ENCODE measurements at regions of chr2 and their contacts with region 1.

Region 1: GRCh38 chr2:11124503-11125068 is 30.7 kb upstream of the SLC66A3 start:
- DNase-seq: peak; percentile 45
- H3K4me3 ChIP-seq: no peak overlapping the region
- H3K27ac ChIP-seq: no peak overlapping the region
- H3K4me1 ChIP-seq: peaks cover 21% of the 10 kb centered on the region
- H3K27me3 ChIP-seq: no peaks in the 10 kb centered on the region
- CTCF ChIP-seq: peak; percentile 91 to 97

Region 2: DNA sequence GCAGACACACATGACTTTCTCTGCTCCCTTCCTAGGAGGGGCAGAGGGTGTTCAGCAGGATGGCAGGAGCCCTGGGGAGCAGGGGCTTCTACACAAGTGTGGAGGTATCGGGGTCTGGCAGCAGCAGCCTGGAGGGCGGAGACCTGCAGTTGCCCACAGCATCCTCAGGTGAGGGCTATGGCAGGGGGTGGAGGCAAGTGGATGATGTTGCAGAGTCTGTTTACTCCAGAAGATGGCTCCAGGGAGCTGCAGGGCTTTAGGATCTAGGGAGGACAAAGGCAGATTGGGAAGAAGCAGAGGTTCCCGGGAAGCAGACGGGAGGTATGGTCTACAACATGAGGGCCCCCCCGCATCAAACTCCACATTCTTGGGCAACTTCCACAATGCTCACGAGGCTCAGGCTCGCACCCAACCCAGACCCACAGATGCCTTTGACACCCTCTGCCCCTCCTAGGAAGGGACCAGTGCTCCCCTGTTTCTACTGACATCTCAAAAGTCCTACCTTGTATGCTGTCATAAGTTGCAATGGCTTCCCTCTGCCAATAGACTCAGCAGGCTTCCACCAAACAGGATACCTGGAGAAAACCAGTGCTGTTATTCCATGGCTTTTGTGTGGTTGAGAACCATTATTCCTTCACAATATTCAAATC is 415.2 kb before region 1 on chr2:
- CTCF ChIA-PET with region 1: no interaction called
- dilution Hi-C with region 1: no loop called
- in situ Hi-C with region 1: loop called in 1 of 2 experiments (anchors 10 kb)
- intact Hi-C with region 1: loop called (anchors 1 kb)
- DNase-seq: peak; percentile 44
- H3K4me3 ChIP-seq: no peak overlapping the region
- H3K27ac ChIP-seq: no peak overlapping the region
- H3K4me1 ChIP-seq: peaks cover 6% of the 10 kb centered on the region
- H3K27me3 ChIP-seq: no peaks in the 10 kb centered on the region
- CTCF ChIP-seq: peak; percentile 64 to 83

Region 3: DNA sequence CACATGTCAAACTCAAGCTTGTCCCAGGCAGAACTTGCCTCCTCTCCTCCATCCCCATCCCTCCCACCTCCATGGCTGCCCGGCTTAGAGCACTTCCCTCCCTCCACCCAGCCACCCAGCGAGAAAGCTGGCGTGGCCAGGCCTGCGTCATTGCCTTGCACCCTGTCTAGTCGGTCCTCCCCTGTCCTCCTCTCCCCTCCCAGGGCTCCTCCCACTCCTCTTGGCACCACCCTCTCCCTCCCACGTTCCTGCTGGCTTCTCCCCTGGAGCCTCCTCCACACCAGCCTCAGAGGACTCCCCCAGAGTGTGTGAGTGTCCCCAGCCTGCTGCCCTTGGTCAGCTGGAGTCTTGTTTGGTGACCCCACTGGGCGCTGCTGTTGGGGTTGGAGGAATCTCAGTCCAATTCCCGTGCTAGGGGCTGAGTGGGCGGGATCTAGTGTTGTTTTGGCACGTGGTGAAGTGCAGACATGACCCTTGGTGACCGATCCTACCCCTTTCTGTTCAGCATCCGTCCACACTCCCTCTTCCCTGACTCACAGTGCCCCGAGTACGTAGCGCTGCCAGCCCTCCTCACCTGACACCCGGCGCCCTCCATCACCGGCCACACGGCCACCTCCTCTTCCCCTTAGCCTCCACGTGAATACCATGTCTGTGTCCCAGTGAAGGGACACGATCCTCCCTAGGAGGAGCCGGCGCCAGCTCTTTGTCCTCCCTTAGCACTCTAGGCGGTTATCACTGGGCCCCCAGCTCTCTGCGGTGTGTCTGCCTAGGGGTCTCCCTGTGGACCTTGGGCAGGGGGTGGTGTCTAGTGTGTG is 361.7 kb before region 1 on chr2:
- CTCF ChIA-PET with region 1: no interaction called
- dilution Hi-C with region 1: no loop called
- in situ Hi-C with region 1: no loop called
- intact Hi-C with region 1: no loop called
- DNase-seq: no peak
- H3K4me3 ChIP-seq: no peak overlapping the region
- H3K27ac ChIP-seq: no peak overlapping the region
- H3K4me1 ChIP-seq: peaks cover 5% of the 10 kb centered on the region
- H3K27me3 ChIP-seq: no peaks in the 10 kb centered on the region
- CTCF ChIP-seq: no peak

Region 4: DNA sequence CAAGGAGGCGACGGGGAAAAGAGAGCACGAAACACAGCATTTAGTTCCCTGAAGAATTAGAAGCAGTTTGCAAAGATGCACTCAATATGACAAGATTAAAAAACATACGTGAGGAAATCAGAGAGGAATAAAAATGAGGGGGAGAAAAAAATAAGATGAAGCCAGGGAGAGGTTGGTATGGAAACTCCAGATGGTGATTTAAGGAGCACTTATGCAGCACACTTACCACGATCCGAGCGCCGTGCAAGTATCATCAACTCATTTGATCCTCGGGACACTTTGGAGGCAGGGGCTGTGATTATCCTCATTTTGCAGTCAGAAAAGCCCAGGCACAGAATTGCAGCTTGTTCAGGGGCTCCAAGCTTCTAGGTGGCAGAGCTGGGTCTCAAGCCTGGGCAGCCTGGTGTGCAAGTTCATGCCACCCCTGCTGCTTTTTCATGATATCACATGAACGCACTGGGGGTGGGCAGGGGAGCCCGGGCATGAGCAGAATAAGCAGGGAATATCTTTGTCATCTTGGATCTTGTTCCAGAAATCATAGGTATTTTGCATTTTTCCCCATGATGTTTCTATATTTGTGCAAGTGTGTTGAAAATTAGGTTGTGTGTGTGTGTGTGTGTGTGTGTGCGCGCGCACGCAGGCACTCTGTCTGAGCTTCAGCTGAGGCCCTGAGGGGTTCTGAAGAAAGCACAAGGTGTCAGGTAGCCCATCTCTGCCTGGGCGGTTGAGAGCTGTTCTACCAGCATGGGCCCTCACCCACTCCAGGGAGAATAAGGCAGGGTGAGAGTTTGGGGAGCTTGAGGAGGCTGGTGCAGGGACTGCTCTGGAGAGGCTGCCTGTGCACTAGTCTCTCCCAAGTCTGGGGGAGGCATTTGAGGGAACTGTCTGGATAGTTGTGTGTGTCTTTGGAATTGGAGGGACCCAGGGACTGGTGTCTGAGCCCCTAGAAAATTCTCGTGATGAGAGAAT is 287.0 kb before region 1 on chr2:
- CTCF ChIA-PET with region 1: interaction called, 14 read pairs
- dilution Hi-C with region 1: no loop called
- in situ Hi-C with region 1: loop called (anchors 5 kb)
- intact Hi-C with region 1: loop called (anchors 1 kb)
- DNase-seq: no peak
- H3K4me3 ChIP-seq: no peak overlapping the region
- H3K27ac ChIP-seq: no peak overlapping the region
- H3K4me1 ChIP-seq: no peaks in the 10 kb centered on the region
- H3K27me3 ChIP-seq: no peaks in the 10 kb centered on the region
- CTCF ChIP-seq: no peak

Region 5: DNA sequence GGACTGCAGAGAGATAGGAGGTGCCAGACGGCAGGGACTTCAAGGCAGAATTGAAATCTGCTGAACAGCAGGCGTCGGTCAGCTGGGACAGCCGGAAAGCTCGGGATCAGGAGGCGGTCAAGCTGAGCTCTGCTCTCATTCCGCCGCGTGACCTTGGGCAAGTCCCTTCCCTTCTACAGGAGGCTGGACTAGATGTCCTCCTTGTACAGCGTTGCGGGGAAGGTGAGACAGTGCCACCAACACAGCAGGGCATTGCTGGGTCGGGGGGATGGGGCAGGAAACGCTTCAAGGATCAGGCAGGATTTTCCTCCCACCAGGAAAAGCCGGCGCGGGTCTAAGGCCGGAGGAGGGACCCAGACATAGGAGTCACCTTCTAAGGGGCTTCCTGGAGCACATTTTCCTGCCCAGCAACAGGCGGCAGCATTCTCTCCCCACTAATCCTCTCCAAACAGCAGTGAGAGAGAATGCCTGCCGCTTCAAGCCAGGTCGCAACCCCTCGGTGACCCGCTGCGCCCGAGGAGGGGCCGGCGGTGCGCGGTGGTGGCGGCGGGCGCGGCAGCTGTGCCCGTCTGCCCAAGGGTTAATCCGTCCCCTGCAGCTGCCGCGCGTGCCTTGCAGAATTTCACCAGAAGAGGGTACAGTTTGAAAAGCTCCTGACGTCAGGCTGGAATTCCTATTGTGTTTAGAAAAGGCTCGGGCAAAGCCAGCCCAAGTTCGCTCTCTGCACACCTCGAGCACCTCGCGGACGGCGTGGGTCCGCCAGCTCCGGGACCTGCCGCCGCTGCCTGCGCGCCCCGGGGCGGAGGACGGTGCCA is 213.1 kb before region 1 on chr2 and contains the start of gene KCNF1:
- CTCF ChIA-PET with region 1: no interaction called
- dilution Hi-C with region 1: no loop called
- in situ Hi-C with region 1: no loop called
- intact Hi-C with region 1: loop called (anchors 1 kb)
- DNase-seq: peak; percentile 58
- H3K4me3 ChIP-seq: peak within 1 kb of the TSS; percentile 1 to 43 (median 32)
- H3K27ac ChIP-seq: no peak within 1 kb of the TSS
- H3K4me1 ChIP-seq: no peaks in the 10 kb centered on the region
- H3K27me3 ChIP-seq: peaks cover 9% of the 10 kb centered on the region
- CTCF ChIP-seq: peak; percentile 23 to 49
- total RNA-seq, gene KCNF1: 0.54 to 2.5 TPM

Region 6: DNA sequence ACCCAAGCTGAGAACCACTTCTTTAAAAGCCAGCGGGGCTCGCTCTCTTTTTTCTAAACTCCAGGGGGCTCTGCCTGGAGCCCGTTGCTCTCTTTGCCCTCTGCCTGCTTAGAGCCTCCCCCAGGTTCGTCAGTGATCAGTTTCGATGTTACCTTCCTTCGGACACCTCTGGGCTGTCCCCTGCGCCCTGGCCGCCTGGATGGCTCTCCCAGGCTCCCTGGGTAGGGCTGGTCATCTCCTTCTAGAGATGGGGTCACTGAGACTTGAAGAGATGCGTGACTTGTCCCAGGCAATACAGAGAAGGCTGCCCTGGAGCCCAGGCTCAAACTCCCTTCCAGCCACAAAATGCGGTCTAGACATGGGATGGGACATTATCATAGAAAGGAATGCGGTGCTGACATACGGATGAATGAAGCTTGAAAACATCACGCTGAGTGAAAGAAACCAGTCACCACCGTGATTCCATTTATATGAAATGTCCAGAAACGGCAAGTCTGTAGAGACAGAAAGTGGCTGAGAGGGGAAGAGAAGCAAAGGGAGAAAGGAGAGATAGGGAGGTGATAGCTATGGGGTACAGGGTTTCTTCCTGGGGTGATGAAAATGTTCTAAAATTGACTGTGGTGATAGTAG is 198.3 kb before region 1 on chr2:
- CTCF ChIA-PET with region 1: no interaction called
- dilution Hi-C with region 1: no loop called
- in situ Hi-C with region 1: no loop called
- intact Hi-C with region 1: loop called (anchors 5 kb)
- DNase-seq: no peak
- H3K4me3 ChIP-seq: no peak overlapping the region
- H3K27ac ChIP-seq: no peak overlapping the region
- H3K4me1 ChIP-seq: no peaks in the 10 kb centered on the region
- H3K27me3 ChIP-seq: peaks cover 4% of the 10 kb centered on the region
- CTCF ChIP-seq: no peak

Region 7: DNA sequence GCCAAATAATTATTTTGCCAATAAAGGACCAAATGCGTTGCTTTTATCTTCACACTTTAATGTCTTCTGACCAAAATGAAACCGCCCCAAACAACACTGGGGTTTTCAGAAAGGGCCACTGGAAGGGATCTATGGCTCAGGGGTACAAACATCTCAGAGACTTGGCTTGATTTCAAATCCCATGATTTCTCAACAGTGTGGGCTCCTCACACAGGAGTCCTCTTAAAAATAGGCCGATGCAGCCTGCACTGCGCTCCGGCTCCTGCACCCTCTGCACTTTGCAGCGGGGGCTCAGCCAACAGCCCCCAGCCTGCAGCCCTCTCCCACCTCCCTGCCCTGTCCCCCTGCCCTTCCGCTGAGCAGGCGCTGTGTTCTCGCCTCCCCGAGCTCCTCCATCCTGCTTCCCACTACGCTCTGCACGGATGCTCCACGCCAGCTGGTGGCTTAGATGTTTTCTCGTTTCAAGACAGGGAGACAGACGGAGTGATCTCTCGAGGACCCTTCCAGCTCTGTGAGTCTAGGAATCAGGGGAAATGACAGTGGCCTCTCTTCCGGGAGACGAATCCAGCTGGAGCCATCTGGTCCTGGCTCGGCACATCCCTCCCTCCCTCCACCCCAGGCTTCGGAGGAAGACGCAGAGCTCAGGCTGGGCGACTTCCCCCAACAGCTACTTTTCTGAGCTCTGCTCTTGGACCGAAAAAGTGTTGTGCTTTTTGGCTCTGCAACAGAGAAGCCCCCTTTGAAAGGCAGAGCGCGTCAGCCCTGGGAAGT is 141.5 kb before region 1 on chr2:
- CTCF ChIA-PET with region 1: no interaction called
- dilution Hi-C with region 1: no loop called
- in situ Hi-C with region 1: no loop called
- intact Hi-C with region 1: no loop called
- DNase-seq: no peak
- H3K4me3 ChIP-seq: no peak overlapping the region
- H3K27ac ChIP-seq: no peak overlapping the region
- H3K4me1 ChIP-seq: peaks cover 6% of the 10 kb centered on the region
- H3K27me3 ChIP-seq: peaks cover 2% of the 10 kb centered on the region
- CTCF ChIP-seq: no peak

Region 8: DNA sequence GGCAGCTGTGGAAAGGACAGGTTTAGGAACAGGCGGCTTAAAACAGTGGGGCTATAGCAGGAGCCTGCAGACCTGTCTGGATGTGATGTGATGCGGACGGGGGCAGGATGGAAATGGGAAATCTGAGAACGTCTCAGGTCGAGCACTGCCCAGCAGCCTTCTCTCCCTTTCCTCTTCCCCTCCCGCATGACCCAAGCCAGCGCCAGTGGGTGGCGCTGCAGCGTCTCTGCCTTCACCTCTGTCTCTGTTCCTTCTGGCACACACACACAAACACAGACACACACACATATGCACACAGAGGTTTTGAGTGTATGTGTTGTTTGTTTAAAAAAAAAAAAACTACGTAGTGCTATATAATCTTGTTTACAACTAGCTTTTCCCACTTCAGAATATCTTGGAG is 51.3 kb before region 1 on chr2:
- CTCF ChIA-PET with region 1: no interaction called
- dilution Hi-C with region 1: no loop called
- in situ Hi-C with region 1: no loop called
- intact Hi-C with region 1: loop called (anchors 2 kb)
- DNase-seq: no peak
- H3K4me3 ChIP-seq: no peak overlapping the region
- H3K27ac ChIP-seq: no peak overlapping the region
- H3K4me1 ChIP-seq: peaks cover 3% of the 10 kb centered on the region
- H3K27me3 ChIP-seq: peaks cover 6% of the 10 kb centered on the region
- CTCF ChIP-seq: peak; percentile 42 to 50

Region 9: GRCh38 chr2:11583840-11584524 is 459.4 kb after region 1 on chr2:
- CTCF ChIA-PET with region 1: no interaction called
- dilution Hi-C with region 1: loop called (anchors 25 kb)
- in situ Hi-C with region 1: no loop called
- intact Hi-C with region 1: no loop called
- DNase-seq: peak; percentile 95
- H3K4me3 ChIP-seq: no peak overlapping the region
- H3K27ac ChIP-seq: peak overlapping the region; percentile 30
- H3K4me1 ChIP-seq: peaks cover 4% of the 10 kb centered on the region
- H3K27me3 ChIP-seq: no peaks in the 10 kb centered on the region
- CTCF ChIP-seq: peak; percentile 78 to 92

Measured in mammary epithelial cell (primary cell).